IMR-90 (cell line): ENCODE measurements at regions of chr4 and their contacts with region 1.

Region 1: DNA sequence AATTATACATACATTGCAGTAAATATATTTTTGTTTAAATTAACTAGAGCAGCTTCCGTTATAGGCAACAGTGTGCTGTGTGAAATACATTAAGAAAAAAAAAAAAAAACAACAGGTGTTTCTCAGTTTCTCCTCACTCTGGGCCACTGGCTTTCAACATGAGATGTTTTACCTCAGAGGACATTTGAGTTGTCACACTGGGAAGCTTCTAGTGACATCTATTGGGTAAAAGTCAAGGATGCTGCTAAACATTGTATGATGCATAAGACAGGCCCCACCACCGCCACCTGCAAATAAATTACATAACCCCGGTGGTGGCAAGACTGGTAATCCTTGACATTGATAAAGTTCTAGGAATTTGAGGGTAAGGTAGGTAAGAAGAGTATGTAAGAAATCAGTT is 1512.2 kb downstream of the C4orf33 start:
- DNase-seq: no peak
- ATAC-seq: no peak
- H3K4me3 ChIP-seq: no peak overlapping the region
- H3K27ac ChIP-seq: no peak overlapping the region
- H3K4me1 ChIP-seq: no peaks in the 10 kb centered on the region
- H3K27me3 ChIP-seq: no peaks in the 10 kb centered on the region
- CTCF ChIP-seq: no peak
- POLR2A ChIP-seq: no peak
- RAD21 ChIP-seq: no peak

Region 2: DNA sequence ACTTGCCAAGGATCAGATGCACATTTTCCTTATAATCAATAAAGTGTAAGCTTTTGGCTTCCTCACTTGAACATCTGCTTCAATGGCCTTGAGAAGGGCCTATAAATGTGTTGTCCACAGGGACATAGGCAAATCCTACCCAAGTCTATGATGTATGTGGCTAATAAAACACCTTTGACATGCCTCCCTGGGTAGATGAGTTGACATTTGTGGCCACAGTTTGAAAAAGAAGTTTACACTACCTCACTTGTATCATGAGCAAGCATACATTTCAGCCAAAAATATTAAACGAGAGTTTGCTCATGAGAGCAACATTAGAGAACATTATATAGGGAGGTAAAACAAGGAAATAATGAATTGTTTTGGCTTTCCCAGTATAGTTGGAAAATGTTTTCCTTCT is 444.4 kb before region 1 on chr4:
- CTCF ChIA-PET with region 1: no interaction called
- POLR2A ChIA-PET with region 1: no interaction called
- dilution Hi-C with region 1: no loop called
- in situ Hi-C with region 1: no loop called
- intact Hi-C with region 1: no loop called
- DNase-seq: no peak
- ATAC-seq: no peak
- H3K4me3 ChIP-seq: no peak overlapping the region
- H3K27ac ChIP-seq: no peak overlapping the region
- H3K4me1 ChIP-seq: no peaks in the 10 kb centered on the region
- H3K27me3 ChIP-seq: no peaks in the 10 kb centered on the region
- CTCF ChIP-seq: no peak
- POLR2A ChIP-seq: no peak
- RAD21 ChIP-seq: no peak

Region 3: DNA sequence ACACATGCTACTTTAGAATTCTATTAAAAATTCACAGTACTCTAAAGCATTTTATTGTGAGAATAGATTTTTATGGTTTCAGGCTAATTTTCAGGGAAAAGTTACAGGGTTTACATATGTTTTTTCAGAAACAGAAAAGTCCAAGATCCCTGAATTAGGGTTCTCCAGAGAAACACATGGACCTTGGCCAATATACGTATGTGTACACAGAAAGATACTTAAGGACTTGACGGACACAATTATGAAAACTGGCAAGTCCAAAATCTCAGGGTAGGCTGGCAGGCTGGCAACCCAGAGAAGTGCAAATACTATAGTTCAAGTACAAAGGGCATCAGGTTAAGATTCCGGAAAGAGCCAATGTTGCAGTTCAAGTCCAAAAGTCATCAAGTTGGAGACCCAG is 643.2 kb after region 1 on chr4:
- CTCF ChIA-PET with region 1: no interaction called
- POLR2A ChIA-PET with region 1: no interaction called
- dilution Hi-C with region 1: no loop called
- in situ Hi-C with region 1: no loop called
- intact Hi-C with region 1: loop called (anchors 5 kb)
- DNase-seq: no peak
- ATAC-seq: no peak
- H3K4me3 ChIP-seq: no peak overlapping the region
- H3K27ac ChIP-seq: no peak overlapping the region
- H3K4me1 ChIP-seq: no peaks in the 10 kb centered on the region
- H3K27me3 ChIP-seq: no peaks in the 10 kb centered on the region
- CTCF ChIP-seq: no peak
- POLR2A ChIP-seq: no peak
- RAD21 ChIP-seq: no peak